ENCODE measurements at regions of chr10 and their contacts with region 1.

Region 1: GRCh38 chr10:31921031-31921430 is 7.6 kb downstream of the ARHGAP12 start:
- DNase-seq: no peak
- H3K4me3 ChIP-seq: no peak overlapping the region
- CTCF ChIP-seq: no peak

Region 2: DNA sequence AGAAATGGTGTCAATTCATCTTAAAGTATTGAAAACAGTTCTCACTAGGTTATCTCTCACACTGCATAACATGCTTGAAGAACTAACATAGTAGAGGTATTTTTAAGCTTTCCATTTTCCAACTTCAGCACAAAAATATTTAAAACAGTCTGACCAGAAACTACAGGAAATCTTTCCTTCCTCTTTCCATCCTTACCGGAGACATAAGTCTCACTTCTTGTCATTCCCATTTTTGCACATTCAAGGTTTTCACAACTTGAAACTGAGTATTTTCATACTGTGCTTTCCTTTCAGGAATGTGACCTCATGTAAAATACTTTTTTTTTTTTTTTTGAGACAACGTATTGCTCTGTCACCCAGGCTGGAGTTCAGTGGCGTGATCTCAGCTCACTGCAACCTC is 37.6 kb before region 1 on chr10:
- in situ Hi-C with region 1: loop called (anchors 5 kb)
- DNase-seq: no peak
- H3K4me3 ChIP-seq: no peak overlapping the region
- CTCF ChIP-seq: no peak

Region 3: DNA sequence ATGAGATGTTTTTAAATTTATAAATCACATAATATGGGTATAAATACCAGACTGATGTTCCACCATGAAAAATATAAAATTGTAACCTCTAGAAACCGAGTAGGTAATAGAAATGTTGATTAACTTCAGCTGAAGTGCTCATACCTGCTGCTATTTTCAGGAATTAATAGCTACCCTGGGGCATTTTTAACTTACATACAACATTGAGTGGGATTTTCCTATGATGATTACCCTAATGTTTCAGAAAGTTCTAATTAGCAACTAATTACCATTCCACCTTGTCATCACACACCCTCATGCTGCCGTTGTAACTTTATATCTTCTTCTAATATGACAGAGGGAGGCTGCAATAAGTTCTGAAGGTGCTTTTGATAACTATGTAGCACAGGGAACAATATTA is 61.1 kb after region 1 on chr10:
- in situ Hi-C with region 1: no loop called
- DNase-seq: no peak
- H3K4me3 ChIP-seq: no peak overlapping the region
- CTCF ChIP-seq: no peak

Measured in astrocyte of the cerebellum (primary cell).